H1 (cell line): ENCODE measurements at regions of chr14 and their contacts with region 1.

Region 1: DNA sequence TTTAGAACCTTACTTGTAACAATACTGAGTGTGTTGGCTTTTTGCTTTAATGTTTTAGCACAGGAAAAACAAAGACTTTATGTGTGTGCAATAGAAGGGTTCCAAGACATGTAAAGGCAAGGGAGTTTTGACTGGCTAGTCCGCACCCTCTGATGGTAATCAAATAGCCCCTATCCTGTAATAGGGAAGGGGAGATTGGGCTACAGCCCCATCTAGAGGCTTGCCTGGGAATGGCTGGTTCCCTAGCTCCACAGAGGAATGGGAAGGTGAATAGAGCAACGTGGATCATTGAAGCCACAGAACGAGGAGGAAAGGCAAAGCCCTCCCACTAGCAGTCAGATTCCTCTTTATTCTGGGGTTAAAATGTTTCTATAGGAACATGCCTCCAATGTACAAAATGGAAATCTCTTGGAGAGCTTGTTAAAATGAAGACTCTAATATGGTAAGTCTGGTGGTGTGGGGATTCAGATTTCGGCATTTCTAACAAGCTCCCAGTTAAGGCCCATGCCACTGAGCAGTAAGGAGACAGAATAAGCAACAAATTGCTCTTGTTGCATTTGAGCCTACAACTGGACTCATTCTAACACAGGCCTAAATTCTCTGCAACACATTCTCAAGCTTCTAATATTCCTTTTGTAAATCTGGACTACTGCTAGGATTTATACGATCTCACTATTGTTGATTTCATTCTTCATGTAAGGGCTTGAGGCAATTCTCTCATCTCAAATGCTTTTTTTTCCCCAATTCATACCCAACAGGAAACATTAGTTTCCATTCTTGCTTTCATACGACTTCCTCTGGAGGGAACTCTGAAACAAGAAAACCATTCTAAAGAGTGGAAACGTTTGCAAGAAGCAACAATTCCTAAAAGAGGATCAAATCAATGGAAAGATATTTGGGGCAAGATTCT is 57.1 kb downstream of the NIN start:
- DNase-seq: peak; percentile 38 to 89
- H3K4me3 ChIP-seq: no peak overlapping the region
- H3K27ac ChIP-seq: no peak overlapping the region
- H3K4me1 ChIP-seq: no peaks in the 10 kb centered on the region
- H3K27me3 ChIP-seq: no peaks in the 10 kb centered on the region
- CTCF ChIP-seq: peak; percentile 78 to 93 (median 85)
- EP300 ChIP-seq: no peak
- POLR2A ChIP-seq: no peak
- RAD21 ChIP-seq: peak; percentile 90 to 93

Region 2: GRCh38 chr14:50578433-50578832 is 195.5 kb before region 1 on chr14:
- CTCF ChIA-PET with region 1: interaction called, 11 read pairs
- POLR2A ChIA-PET with region 1: no interaction called
- DNase-seq: no peak
- H3K4me3 ChIP-seq: no peak overlapping the region
- H3K27ac ChIP-seq: no peak overlapping the region
- H3K4me1 ChIP-seq: no peaks in the 10 kb centered on the region
- H3K27me3 ChIP-seq: no peaks in the 10 kb centered on the region
- CTCF ChIP-seq: no peak
- EP300 ChIP-seq: no peak
- POLR2A ChIP-seq: no peak
- RAD21 ChIP-seq: no peak

Region 3: DNA sequence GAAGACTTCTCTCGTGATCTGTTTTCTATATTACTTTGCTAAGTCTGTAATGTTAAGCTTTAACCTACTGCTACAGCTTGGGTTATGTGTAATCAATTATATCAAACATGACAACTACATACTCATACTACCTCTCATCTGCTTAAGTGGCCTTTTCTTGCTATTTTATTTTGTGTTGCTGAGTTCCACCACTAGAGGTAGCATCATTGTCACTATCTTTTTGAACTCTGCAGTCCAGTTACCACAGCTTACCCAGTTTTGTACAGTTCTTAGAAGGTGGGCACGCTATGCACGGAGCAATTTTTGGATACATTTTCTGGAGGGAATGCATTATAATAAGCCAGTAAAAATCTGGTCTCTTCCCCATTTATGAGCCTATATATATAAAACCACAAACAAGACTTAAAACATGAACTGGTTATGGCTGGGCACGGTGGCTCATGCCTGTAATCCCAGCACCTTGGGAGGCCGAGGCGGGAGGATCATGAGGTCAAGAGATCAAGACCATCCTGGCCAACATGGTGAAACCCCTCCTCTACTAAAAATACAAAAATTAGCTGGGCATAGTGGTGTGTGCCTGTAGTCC is 154.2 kb before region 1 on chr14:
- CTCF ChIA-PET with region 1: interaction called, 20 read pairs
- POLR2A ChIA-PET with region 1: interaction called, 3 read pairs
- DNase-seq: no peak
- H3K4me3 ChIP-seq: no peak overlapping the region
- H3K27ac ChIP-seq: no peak overlapping the region
- H3K4me1 ChIP-seq: no peaks in the 10 kb centered on the region
- H3K27me3 ChIP-seq: no peaks in the 10 kb centered on the region
- CTCF ChIP-seq: peak in 2 of 3 experiments; percentile 47 to 65; a peak in 3 of 4 replicates
- EP300 ChIP-seq: no peak
- POLR2A ChIP-seq: no peak
- RAD21 ChIP-seq: peak; percentile 57 to 69

Region 4: DNA sequence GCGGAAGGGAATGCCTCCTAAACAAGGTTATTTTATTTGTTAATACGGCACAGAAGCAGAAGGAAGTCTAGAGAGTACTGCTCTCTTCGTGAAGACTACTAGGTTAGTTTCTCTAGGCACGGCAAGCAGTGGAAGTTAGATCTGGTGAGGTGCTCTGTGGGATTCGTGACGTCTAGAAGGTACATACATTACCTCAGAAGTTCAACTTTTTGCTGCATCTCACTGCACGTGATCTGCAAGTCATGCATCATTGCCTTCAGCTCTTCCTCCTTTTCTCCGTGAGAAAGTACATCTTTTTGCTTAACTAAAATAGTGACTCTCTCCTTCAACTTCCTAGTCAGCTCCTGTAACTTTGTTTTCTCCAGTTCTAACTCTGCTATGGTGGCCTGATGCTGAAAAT is 17.6 kb before region 1 on chr14:
- CTCF ChIA-PET with region 1: interaction called, 102 read pairs
- POLR2A ChIA-PET with region 1: interaction called, 3 read pairs
- DNase-seq: no peak
- H3K4me3 ChIP-seq: no peak overlapping the region
- H3K27ac ChIP-seq: no peak overlapping the region
- H3K4me1 ChIP-seq: no peaks in the 10 kb centered on the region
- H3K27me3 ChIP-seq: no peaks in the 10 kb centered on the region
- CTCF ChIP-seq: no peak
- EP300 ChIP-seq: no peak
- POLR2A ChIP-seq: no peak
- RAD21 ChIP-seq: no peak

Region 5: DNA sequence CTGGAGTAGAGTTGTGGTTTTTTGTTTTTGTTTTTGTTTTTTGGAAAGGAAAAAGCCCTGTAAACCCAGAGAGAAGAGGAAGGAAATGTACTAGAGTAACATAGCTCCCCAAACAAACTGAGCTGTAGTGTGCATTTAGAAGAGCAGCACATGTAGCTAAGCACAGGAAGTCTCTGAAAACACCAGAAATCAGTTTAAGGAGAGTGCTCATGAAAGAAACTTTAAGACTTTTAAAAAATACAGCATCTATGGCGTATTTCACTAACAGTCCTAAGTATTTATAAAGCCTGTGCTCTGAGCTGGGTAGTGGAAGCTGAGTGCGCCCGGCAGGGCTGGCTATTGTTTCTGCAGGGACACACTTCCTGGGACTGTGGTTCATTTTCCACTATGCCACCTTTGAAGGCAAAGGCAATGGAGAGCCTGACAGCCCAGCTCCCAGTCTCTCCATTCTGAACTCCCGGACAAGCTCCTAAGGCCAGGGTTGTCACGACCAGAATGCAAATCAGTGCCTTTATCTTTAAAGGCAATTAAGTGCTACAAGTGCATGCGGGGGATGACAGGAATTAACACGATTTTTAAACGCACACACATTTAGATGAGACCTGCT is 11.7 kb after region 1 on chr14:
- CTCF ChIA-PET with region 1: interaction called, 40 read pairs
- POLR2A ChIA-PET with region 1: interaction called, 3 read pairs
- DNase-seq: no peak
- H3K4me3 ChIP-seq: no peak overlapping the region
- H3K27ac ChIP-seq: no peak overlapping the region
- H3K4me1 ChIP-seq: peaks cover 3 to 23% (median 8%) of the 10 kb centered on the region in 4 experiments; a peak in 6 of 7 replicates
- H3K27me3 ChIP-seq: no peaks in the 10 kb centered on the region
- CTCF ChIP-seq: no peak
- EP300 ChIP-seq: no peak
- POLR2A ChIP-seq: no peak
- RAD21 ChIP-seq: no peak

Region 6: GRCh38 chr14:50860478-50861086 is 86.7 kb after region 1 on chr14:
- CTCF ChIA-PET with region 1: interaction called, 58 read pairs
- POLR2A ChIA-PET with region 1: no interaction called
- DNase-seq: peak; percentile 61 to 94
- H3K4me3 ChIP-seq: peak overlapping the region in 1 of 4 experiments; percentile 37; a peak in 1 of 8 replicates
- H3K27ac ChIP-seq: no peak overlapping the region
- H3K4me1 ChIP-seq: peaks cover 0 to 8% (median 5%) of the 10 kb centered on the region in 4 experiments; a peak in 4 of 7 replicates
- H3K27me3 ChIP-seq: no peaks in the 10 kb centered on the region
- CTCF ChIP-seq: peak; percentile 50 to 57 (median 54)
- EP300 ChIP-seq: no peak
- POLR2A ChIP-seq: no peak
- RAD21 ChIP-seq: peak; percentile 64 to 80

Region 7: GRCh38 chr14:50875359-50876070 is 101.6 kb after region 1 on chr14:
- CTCF ChIA-PET with region 1: no interaction called
- POLR2A ChIA-PET with region 1: no interaction called
- DNase-seq: no peak
- H3K4me3 ChIP-seq: no peak overlapping the region
- H3K27ac ChIP-seq: no peak overlapping the region
- H3K4me1 ChIP-seq: peaks cover 0 to 3% (median 1%) of the 10 kb centered on the region in 4 experiments; a peak in 1 of 7 replicates
- H3K27me3 ChIP-seq: peaks cover 3 to 24% (median 14%) of the 10 kb centered on the region in 4 experiments; a peak in 6 of 7 replicates
- CTCF ChIP-seq: no peak
- EP300 ChIP-seq: no peak
- POLR2A ChIP-seq: no peak
- RAD21 ChIP-seq: no peak